Posterior cingulate gyrus (tissue), 11 donors: ENCODE measurements at regions of chr6 and their contacts with region 1.

Region 1: DNA sequence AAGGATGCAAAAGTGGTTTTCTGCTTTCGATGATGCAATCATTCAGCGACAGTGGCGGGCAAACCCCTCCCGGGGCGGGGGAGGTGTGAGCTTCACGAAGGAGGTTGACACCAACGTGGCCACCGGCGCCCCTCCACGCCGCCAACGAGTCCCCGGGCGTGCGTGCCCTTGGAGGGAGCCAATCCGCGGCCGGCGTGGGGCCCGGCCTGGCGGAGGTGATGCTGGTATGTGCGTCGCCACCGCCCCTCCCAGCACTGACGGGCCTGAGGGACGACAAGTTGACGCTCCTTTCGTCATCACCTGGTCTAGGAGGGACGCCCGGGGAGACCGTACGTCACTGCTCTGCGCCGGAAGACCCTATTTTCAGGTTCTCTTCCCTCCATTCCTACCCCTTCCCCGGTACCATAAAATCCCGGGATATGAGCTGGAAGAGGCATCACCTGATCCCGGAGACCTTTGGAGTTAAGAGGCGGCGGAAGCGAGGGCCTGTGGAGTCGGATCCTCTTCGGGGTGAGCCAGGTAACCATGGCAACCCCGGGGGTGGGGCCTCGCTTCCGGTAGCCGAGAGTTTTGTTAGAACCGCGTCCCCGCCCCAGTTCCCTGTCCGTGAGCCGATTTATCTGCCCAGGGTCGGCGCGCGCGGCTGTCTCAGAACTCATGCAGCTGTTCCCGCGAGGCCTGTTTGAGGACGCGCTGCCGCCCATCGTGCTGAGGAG is at the start of gene DXO:
- DNase-seq: peak; percentile 89 to 99 (median 95)

Region 2: DNA sequence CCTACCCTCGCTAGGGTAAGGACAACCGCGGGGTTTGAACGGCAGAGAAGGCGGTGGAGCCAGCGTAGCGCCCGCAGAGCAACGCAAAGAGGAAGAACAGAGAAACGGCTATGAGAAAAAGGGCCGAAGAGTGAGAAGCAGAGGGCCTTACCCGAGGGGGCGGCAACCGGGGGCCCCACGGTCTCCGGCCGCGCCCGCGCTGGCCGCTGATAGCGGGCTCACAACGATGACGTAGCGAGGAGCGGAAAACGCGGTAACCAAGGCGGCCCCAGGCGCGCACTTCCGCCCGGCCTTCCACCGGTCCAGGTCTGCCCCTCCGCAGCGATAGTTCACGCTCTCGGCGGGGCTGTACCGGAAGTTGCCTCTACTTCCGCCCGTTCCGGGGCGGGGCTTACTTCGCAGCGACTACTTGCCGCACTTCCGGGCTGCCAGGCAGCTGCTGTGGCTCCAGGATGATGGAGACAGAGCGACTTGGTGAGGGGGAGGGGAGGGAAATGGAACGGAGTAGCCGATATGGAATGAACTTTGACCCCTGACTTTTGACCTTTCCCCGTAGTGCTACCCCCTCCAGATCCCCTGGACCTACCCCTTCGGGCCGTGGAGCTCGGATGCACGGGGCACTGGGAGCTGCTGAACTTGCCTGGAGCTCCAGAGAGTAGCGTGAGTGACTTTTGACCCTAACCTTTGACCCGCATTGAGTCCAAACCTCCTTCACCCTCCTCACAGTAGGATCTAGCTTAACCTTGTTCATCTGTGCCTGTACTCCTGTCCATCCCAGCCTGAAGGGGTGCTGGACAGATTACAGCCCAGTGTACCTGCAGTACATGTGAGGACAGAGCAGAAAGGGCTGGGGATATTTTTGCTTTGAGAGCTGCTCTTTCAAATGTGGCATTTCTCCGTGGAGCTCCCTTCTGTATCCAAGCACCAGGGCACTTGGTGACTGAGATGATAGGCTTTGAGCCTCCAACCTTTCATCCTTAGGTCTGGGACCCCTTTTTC is 13.1 kb before region 1 on chr6 and contains the starts of genes NELFE and SKIC2:
- intact Hi-C with region 1: loop called (anchors 1 kb)
- DNase-seq: peak; percentile 98 to 100 (median 99)

Region 3: DNA sequence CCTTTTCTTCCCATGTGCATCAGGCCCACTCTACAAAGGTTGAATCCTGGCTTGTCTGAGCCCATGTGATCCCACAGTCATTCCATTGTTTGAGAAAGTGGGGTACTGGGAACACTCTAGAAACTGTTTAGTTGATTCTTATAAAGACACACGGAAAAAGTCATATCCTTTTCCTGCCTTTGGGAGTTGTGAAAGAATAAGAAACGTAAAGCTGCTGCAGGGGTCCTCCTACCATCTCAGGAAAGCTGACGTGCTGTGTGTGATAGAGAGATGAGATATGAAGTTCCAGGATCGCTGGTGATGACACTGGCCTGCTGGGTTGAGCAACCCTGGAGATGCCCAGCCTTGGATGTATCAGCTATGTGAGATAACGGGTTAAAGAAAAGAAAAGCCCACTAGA is 579.3 kb after region 1 on chr6:
- intact Hi-C with region 1: no loop called
- DNase-seq: no peak